AG04449 (cell line): ENCODE measurements at regions of chr9 and their contacts with region 1.

Region 1: DNA sequence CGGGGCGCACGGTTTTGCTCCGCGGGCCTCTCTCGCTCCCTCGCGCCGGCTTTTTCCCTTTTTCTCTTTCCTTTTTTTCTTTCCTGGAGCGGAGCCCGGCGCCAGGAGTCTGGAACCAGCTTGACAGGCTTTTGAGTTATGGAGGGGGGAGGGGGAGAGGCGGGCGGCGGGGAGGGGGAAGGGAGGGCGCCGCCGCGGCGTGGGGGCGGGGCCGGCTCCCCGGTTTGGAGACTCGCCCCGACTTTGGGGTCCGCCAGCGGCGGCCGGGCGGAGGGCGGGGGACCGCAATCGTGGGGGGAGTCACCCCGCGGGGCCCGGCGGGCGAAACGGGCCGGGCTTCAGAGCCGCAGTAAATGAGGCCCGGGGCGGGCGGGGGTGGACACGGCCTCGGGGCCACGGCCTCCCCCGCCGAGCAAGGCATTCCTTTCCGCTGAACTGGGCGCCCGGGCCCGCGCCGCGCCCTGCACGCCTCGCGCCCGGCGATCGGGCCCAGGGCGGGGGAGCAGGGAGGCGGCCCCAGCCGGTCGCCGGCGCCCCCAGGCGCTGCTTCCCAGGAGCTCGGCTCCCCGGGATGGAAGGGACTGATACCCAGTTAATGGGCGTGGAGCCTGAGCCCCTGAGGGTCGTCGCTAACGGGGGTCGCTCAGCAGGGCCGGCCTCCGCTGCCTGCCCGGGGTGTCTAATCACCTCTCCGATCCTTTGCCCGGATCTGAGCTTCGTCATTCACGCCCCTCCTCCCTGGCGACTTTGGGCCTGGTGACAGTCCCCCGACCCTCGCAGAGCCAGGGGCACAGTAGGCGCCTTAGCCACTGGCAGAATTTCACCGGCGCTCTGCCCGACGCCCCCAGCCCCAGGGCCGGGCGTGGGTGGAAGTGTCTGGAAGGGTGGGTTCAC is 138.1 kb downstream of the C9orf50 start:
- DNase-seq: no peak
- H3K4me3 ChIP-seq: peak overlapping the region; percentile 37
- CTCF ChIP-seq: peak; percentile 28

Region 2: GRCh38 chr9:129172802-129173201 is 310.0 kb before region 1 on chr9:
- CTCF ChIA-PET with region 1: interaction called, 20 read pairs
- POLR2A ChIA-PET with region 1: interaction called, 101 read pairs
- DNase-seq: no peak
- H3K4me3 ChIP-seq: no peak overlapping the region
- CTCF ChIP-seq: no peak

Region 3: DNA sequence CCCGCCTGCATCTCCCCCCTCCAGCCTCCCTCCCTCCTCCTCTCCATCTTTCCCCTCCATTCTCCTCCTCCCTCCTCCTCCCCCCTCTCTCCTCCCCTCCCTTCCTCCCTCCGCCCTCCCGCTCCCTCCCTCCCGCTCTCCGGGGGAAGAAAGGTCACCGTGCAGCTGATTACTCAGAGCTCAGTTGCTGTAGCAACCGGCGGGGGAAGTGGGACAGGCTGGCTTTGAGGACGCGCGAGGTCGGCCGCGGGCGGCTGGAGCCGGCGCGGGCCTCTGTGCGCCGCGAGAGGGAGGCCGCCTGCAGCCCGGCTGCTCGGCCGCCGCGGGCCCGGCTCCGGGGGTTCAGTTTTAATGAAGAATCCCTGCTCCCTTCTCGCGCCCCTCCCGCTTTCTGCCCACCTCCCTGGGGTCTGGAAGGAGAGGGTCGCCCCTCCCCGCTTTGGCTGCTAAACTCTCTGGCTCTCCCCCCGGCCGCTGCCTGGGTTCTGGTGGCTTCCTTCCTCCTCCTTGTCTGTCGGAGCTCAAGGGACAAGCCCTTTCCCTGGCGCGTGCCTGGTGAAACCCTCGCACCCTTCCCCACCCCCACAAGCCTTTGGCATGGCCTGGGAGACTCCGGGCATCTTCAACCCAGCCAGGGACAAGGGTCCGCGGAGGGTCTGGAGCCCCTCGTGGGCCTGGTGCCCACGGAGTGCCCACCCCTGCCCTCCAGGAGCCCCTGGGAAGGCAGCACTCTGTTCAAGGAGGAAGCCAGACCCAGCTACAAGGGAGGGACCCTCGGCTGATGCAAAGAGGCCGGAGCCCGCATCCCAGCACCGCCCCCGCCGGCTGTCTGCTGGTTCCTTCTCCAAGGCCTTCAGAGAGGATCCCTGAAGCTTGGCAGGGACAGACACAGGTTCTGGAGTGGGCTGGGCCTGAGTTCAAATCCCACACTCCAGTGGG is 22.2 kb before region 1 on chr9:
- CTCF ChIA-PET with region 1: interaction called, 9 read pairs
- POLR2A ChIA-PET with region 1: interaction called, 32 read pairs
- DNase-seq: peak; percentile 92
- H3K4me3 ChIP-seq: peak overlapping the region; percentile 53
- CTCF ChIP-seq: peak; percentile 24